T-cell (primary cell): ENCODE measurements at regions of chr12 and their contacts with region 1.

Region 1: DNA sequence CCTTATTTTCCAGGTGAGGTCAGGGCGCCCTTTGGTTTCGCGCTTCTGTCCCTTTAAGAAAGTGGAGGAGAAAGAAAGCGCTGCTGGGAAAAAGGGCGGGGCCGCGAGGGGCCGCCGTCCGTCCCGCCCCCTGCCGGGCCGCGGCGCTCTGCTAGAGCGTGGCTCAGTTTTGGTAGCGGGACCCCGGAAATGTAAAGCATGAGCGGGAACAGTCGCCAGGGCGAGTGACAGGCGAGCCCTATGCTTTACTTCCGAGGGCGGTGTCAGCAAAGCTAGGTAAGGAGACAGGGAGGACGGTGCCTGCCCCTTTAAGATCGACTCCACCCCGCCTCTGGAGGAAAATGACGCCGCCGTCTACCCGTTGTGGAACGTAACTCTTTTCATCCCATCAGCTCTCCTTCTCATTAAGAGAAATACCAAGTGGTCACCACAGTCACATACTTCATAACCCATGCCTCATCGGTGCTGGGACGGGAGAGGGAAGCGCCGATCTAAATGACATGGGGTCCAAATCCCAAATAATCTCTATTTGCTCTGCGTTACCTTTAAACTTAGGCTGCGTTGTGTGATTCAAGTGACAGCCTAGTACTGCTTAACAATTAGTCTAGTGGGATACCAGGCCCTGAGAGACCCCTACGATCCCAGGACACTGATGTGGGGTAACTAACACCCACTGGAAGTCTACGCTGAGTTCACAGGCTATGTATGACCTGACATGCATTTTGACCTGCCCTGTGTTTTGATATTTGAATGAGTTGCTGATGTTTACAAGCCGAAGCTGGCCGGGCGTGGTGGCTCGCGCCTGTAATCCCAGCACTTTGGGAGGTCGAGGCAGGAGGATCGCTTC is at the start of gene ETFBKMT:
- DNase-seq: peak; percentile 83 to 96 (median 90)
- ATAC-seq: peak; percentile 99 to 100 (median 100)
- H3K4me3 ChIP-seq: peak within 1 kb of the TSS; percentile 68 to 88
- H3K4me3 Mint-ChIP-seq: peak within 1 kb of the TSS; percentile 93 to 97 (median 94)
- H3K27ac ChIP-seq: peak within 1 kb of the TSS; percentile 95
- H3K27ac Mint-ChIP-seq: peak within 1 kb of the TSS; percentile 96 to 99
- H3K4me1 ChIP-seq: peaks cover 6 to 16% of the 10 kb centered on the region in 2 experiments
- H3K4me1 Mint-ChIP-seq: peaks cover 11 to 23% (median 20%) of the 10 kb centered on the region in 3 donors
- H3K27me3 ChIP-seq: no peaks in the 10 kb centered on the region
- H3K27me3 Mint-ChIP-seq: no peaks in the 10 kb centered on the region
- total RNA-seq, gene ETFBKMT: 0.48 to 2.1 (median 1.6) TPM

Region 2: GRCh38 chr12:31591380-31591901 is 67.9 kb before region 1 on chr12:
- CTCF ChIA-PET with region 1: no interaction called
- POLR2A ChIA-PET with region 1: no interaction called
- DNase-seq: peak in 1 of 35 experiments; percentile 2
- ATAC-seq: peak in 3 of 4 experiments; percentile 10 to 28 (median 12)
- H3K4me3 ChIP-seq: peak overlapping the region in 1 of 2 donors; percentile 55
- H3K4me3 Mint-ChIP-seq: peak overlapping the region; percentile 75 to 85 (median 85)
- H3K27ac ChIP-seq: no peak overlapping the region
- H3K27ac Mint-ChIP-seq: no peak overlapping the region
- H3K4me1 ChIP-seq: peaks cover 0 to 11% of the 10 kb centered on the region in 2 experiments
- H3K4me1 Mint-ChIP-seq: peaks cover 9 to 13% (median 11%) of the 10 kb centered on the region in 3 donors
- H3K27me3 ChIP-seq: peaks cover 0 to 46% of the 10 kb centered on the region in 2 experiments
- H3K27me3 Mint-ChIP-seq: peaks cover 51% of the 10 kb centered on the region in 2 donors

Region 3: DNA sequence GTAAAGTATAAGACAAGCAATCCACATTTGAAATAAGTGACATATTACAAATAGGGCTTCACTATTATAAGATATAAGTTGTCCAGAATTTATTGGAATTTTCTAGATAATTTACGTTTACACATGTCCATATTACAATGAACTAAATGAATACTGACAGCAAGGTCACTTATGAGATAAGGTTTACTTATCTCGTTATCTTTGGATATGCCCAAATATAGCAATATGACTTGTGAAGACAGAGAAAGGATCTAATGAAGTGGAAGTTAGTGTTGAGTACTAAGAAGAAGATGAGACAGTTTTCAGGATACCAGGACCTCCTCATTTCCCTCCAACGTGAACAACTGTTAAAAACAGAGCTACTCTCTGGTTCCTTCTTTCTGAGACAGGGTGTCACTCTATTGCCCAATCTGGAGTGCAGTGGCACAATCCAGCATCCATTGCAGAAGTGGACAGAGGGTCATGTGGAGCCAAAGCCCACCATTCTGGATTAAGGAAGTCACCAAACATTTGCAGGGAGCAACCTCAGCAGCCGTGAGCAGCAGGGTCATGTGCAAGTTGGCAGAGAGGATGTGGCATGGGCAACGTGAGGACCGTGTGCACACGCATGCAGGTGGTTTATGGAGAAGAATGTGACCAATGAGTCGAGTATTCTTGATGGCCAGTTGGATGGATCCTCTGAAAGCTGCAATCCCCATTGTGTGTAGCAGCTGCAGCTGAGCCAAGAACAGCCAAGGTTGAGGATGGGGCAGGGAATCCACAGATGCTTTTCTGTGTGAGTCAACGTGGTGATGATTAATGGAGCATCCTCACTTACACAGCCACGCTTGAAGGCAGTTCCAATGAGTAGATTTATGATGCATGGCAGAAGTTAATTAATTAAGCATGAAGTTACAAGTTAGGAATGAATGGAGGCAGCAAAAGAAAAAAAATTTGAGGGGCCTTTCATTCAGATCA is 558.3 kb after region 1 on chr12:
- CTCF ChIA-PET with region 1: interaction called in 1 of 2 experiments, 11 read pairs
- POLR2A ChIA-PET with region 1: no interaction called
- DNase-seq: no peak
- ATAC-seq: no peak
- H3K4me3 ChIP-seq: no peak overlapping the region
- H3K4me3 Mint-ChIP-seq: no peak overlapping the region
- H3K27ac ChIP-seq: no peak overlapping the region
- H3K27ac Mint-ChIP-seq: no peak overlapping the region
- H3K4me1 ChIP-seq: no peaks in the 10 kb centered on the region
- H3K4me1 Mint-ChIP-seq: no peaks in the 10 kb centered on the region
- H3K27me3 ChIP-seq: no peaks in the 10 kb centered on the region
- H3K27me3 Mint-ChIP-seq: no peaks in the 10 kb centered on the region

Region 4: DNA sequence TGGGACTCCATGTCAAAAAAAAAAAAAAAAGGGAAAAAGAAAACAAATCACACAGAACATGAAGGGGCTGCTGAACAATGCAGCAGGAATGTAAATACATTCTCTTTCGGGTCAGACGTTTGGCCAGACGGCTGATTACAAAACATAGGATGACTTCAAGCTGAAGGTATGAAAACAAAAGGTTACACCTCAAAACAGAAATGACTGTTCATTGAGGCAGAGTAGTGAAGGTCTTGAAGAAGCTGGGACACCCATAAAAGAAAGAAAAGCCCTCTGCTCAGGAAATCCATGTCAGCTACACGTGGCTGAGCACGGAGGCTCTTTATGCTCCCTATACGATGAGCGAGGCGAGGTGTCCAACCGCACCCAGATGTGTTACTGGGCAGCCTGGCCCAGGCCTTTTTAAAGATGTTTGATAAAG is 777.8 kb after region 1 on chr12:
- CTCF ChIA-PET with region 1: no interaction called
- POLR2A ChIA-PET with region 1: interaction called in 1 of 2 experiments, 14 read pairs
- DNase-seq: no peak
- ATAC-seq: no peak
- H3K4me3 ChIP-seq: no peak overlapping the region
- H3K4me3 Mint-ChIP-seq: no peak overlapping the region
- H3K27ac ChIP-seq: no peak overlapping the region
- H3K27ac Mint-ChIP-seq: no peak overlapping the region
- H3K4me1 ChIP-seq: no peaks in the 10 kb centered on the region
- H3K4me1 Mint-ChIP-seq: no peaks in the 10 kb centered on the region
- H3K27me3 ChIP-seq: peaks cover 0 to 5% of the 10 kb centered on the region in 2 experiments
- H3K27me3 Mint-ChIP-seq: peaks cover 3% of the 10 kb centered on the region in 2 donors